Dendritic cell treated with granulocyte-macrophage colony-stimulating factor and Interleukin-4, amounts not matched to agents 40 ng/mL and 50 ng/mL, for 4 days (primary cell): ENCODE measurements at regions of chr21 and their contacts with region 1.

Region 1: DNA sequence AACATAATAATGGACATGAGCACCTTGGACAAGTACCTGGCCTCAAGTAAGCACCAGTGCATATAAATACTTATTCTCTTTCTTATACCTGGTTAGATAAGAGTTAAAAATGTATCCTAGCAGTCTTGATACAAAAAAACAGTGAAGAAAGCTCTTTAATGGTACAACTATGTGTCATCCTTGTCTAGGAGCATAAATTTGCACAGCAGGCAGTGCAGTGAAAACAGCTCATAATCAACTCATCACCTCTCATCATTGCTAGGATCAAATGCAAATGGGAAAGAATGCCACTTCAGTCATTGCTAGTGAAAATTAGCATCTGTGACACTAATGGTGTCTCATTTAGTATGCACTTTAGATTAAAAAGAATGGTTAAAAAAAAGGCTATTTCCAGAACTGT is 7.6 kb downstream of the SAMSN1 start:
- H3K4me3 Mint-ChIP-seq: no peak overlapping the region
- H3K27ac Mint-ChIP-seq: no peak overlapping the region
- H3K4me1 Mint-ChIP-seq: peaks cover 59% of the 10 kb centered on the region
- H3K27me3 Mint-ChIP-seq: no peaks in the 10 kb centered on the region

Region 2: GRCh38 chr21:14686466-14687267 is 148.2 kb after region 1 on chr21:
- intact Hi-C with region 1: loop called (anchors 5 kb)
- H3K4me3 Mint-ChIP-seq: no peak overlapping the region
- H3K27ac Mint-ChIP-seq: peak overlapping the region; percentile 90
- H3K4me1 Mint-ChIP-seq: peaks cover 87% of the 10 kb centered on the region
- H3K27me3 Mint-ChIP-seq: no peaks in the 10 kb centered on the region